Astrocyte of the cerebellum (primary cell): ENCODE measurements at regions of chr16 and their contacts with region 1.

Region 1: DNA sequence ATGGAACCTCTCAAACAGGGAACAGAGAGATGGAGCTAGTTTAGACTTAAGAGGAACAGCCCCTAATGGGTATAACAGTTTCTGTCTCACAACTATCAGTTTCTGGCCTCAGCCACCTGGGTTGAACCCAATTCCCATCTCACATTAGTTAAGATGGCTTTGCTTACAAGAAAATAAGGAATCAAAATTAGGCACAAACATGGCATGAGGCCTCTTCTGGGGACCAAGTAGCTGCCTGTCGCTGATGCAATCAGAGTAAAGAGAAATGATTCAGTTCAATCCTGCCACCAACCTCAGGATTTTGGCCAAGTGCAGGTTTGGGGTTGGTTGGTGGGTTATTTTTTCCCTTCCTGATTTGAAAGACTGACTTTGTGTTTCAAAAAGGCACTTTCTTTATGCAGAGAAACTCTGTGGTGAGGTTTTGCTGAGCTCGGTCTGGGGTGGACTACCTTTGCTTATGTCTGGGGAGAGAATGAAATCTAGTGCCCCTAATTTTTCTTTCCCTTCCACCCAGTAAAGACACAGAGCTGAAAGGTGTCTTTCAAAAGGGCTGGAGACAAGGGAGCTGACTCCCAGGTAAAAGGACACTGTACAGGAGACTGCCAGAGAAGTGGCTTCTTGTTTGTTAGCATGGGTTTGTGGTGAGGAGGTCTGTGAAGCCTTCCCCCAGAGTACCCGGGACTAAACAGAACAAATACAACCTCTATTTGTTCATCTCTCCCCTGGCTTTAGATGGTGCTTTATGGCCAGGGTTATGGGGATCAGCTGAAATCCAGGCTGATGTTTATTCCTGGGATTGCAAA is 44.8 kb upstream of the NFAT5 start:
- DNase-seq: no peak
- H3K4me3 ChIP-seq: no peak overlapping the region
- CTCF ChIP-seq: no peak

Region 2: DNA sequence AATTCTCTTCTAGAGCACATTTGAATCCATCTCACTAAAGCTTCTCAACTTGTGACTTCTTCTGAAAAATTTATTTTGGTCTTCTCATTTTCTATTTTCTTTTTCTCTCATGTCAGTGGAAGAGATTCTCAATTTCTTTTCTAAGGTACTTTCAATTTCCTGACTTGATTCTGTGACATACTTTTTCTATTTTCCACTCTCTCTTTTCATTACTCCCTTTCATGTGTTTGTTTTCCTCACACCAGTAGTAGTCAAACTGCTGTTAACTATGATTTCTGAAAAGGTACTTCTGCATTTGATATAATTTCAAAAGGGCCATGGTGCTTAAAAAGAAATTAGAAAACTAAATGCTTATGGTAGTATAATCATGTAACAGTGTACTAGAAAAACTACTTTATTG is 86.7 kb after region 1 on chr16:
- in situ Hi-C with region 1: loop called (anchors 5 kb)
- DNase-seq: no peak
- H3K4me3 ChIP-seq: no peak overlapping the region
- CTCF ChIP-seq: no peak

Region 3: GRCh38 chr16:69618307-69618706 is 97.3 kb after region 1 on chr16:
- in situ Hi-C with region 1: no loop called
- DNase-seq: no peak
- H3K4me3 ChIP-seq: no peak overlapping the region
- CTCF ChIP-seq: no peak